Esophagus squamous epithelium (tissue), 5 donors: ENCODE measurements at regions of chr5 and their contacts with region 1.

Region 1: GRCh38 chr5:74786867-74787266 is 19.8 kb downstream of the NSA2 start:
- DNase-seq: no peak
- H3K4me3 ChIP-seq: no peak overlapping the region
- H3K27ac ChIP-seq: no peak overlapping the region
- H3K4me1 ChIP-seq: no peaks in the 10 kb centered on the region
- H3K27me3 ChIP-seq: no peaks in the 10 kb centered on the region
- CTCF ChIP-seq: no peak
- POLR2A ChIP-seq: no peak

Region 2: DNA sequence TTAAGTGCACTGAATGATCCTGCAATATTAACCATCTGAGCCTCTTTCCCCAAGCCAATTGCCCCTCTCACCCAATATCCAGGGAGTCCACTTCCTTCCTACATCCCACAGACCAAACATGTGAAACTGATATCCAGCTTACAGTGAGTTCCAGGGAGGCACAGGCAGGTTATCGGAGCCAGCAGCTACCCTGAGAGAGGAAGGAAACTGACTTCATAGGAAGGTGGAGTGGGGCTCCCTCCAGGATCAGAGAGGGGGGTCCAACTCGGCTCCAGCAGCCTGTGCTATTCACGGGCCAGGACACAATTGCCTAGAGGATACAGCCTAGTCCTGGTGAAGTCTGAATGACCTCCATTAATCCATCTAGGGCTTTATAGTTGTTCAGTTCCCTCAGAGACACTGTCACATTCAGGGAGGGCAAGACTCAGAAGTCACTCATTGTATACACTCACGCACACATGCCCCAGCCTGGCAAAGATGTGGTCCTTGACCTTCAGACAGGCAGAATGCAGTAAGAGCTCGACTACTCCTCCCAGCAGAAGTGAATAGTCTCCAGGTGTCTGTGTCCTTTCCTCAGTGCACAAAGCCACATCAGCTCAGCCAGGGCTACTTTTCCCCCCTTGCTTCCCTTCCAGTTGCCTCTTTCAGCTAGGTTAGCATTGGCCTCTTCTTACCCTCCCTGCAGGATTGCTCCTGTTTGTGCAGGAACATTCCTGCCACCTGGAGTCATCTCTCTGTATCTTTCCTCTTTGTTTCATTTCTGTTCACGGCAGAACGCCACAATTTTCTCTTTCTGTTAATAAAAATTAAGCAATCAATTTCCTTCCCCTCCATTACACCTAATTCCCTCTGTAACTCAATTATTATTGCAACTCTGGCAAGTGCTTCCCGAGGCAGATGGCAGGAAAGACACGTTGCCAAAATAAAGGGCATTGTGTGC is 659.2 kb before region 1 on chr5:
- intact Hi-C with region 1: no loop called
- DNase-seq: no peak
- H3K4me3 ChIP-seq: no peak overlapping the region
- H3K27ac ChIP-seq: peak overlapping the region in 1 of 4 donors; percentile 19
- H3K4me1 ChIP-seq: peaks cover 0 to 7% (median 0%) of the 10 kb centered on the region in 3 donors
- H3K27me3 ChIP-seq: no peaks in the 10 kb centered on the region
- CTCF ChIP-seq: peak in 3 of 6 experiments; percentile 20 to 37 (median 32)
- POLR2A ChIP-seq: no peak

Region 3: DNA sequence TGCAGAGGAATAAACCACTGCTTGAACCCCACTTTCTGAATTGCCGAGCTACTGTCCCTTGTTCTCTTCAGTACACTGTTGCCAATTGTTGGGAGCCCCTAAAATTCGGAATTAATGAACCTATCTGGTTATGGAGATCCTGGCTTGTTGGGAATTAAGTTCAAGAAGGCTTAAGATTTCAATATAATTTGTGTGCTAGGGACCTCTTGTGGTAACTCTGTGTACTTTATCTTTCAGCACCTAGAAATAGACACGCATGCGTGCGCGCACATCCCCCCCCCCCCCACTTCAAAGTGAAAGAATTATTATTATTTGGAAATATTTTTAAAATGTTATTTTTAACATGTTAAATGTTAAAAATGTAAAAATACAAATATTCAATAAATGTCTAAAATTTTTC is 132.6 kb after region 1 on chr5:
- intact Hi-C with region 1: loop called (anchors 10 kb)
- DNase-seq: no peak
- H3K4me3 ChIP-seq: no peak overlapping the region
- H3K27ac ChIP-seq: no peak overlapping the region
- H3K4me1 ChIP-seq: no peaks in the 10 kb centered on the region
- H3K27me3 ChIP-seq: no peaks in the 10 kb centered on the region
- CTCF ChIP-seq: peak; percentile 25 to 72 (median 62)
- POLR2A ChIP-seq: no peak

Region 4: DNA sequence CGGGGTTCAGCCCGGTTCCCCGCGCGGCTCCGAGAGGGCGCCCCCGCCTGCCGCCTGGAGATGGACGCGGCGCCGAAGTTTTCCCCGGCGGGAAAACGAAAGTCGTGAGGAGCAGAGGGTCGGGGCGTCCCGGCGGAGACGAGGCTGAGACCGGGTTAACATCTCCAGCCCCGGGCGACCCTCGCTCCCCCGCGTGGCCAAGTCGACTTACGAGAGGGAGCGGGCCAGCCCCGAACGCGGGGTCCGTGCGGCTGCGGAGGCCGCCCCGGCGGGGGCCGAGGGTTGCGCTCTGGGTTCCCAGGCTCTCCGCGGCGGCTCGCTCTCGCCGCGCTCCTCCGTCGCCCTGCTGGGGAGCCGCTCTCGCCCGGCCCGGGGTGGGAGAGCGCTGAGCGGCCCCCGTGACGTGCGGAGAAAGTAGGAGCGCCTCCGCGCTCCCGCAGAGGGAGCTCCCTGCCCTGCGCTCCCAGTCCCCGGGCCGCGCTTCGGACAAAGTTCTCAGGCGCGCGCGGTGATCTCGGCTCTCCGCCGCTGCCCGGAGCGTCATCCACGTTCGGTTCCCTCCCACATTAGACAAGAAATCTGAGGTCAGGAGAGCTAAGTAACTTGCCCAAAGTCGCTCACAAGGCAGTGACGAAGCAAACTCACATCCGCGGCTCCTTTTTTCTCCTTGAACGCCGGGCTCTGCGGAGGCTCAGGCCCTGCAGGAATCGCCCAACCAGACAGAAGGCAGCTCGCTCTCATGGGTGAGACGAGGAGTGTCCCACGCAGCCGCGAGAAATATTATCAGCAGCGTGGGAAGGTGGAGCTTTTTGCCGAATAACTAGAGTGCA is 266.7 kb after region 1 on chr5:
- intact Hi-C with region 1: no loop called
- DNase-seq: no peak
- H3K4me3 ChIP-seq: peak overlapping the region; percentile 73 to 95 (median 88)
- H3K27ac ChIP-seq: peak overlapping the region; percentile 84 to 95 (median 92)
- H3K4me1 ChIP-seq: peaks cover 9 to 53% (median 10%) of the 10 kb centered on the region in 3 donors
- H3K27me3 ChIP-seq: peaks cover 0 to 10% (median 0%) of the 10 kb centered on the region in 4 donors
- CTCF ChIP-seq: peak in 1 of 6 experiments; percentile 1
- POLR2A ChIP-seq: peak in 3 of 4 donors; percentile 30 to 70 (median 44)